ENCODE measurements at regions of chr1 and their contacts with region 1.

Region 1: DNA sequence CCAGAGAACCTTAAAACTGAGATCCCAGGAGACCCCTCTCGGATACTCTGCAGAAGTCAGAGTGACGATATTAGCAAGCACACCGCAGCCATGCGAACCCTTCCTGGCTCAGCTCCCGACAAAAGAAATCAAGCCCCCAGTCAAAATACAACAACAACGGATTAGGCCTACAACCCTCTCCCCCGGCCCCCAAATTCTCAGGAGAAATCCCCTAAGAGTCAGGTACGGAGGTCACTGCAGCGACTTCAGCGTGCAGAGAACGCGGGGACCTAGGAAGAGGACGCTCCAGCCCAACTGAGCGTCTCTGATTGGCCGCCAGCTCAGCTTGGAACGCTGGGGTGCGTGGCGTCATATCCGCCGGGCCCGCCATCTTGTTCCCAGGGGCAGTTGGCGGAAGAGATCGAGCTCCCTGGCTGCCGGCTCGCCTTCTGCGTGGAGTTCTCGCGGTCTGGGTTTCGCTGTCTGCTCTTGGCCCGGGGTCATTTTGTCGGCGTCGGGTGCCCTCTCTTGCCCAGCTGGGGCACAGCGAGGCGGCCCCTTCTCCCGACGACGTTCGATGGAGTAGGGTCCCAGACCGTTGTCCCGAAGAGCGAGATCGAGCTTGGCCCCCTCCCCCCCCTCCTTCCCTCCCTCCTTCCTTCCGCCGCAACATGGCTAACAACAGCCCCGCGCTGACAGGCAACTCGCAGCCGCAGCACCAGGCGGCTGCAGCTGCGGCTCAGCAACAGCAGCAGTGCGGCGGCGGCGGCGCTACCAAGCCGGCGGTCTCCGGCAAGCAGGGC is at the start of gene PRPF38B:
- DNase-seq: peak; percentile 72
- H3K4me3 ChIP-seq: peak within 1 kb of the TSS; percentile 89
- H3K27ac ChIP-seq: peak within 1 kb of the TSS; percentile 97
- H3K27me3 ChIP-seq: no peaks in the 10 kb centered on the region
- CTCF ChIP-seq: no peak
- polyA plus RNA-seq, gene PRPF38B: 23.4 and 35.6 TPM in 2 replicates

Region 2: GRCh38 chr1:108653431-108654105 is 38.6 kb before region 1 on chr1:
- CTCF ChIA-PET with region 1: no interaction called
- POLR2A ChIA-PET with region 1: no interaction called
- DNase-seq: no peak
- H3K4me3 ChIP-seq: no peak overlapping the region
- H3K27ac ChIP-seq: no peak overlapping the region
- H3K27me3 ChIP-seq: no peaks in the 10 kb centered on the region
- CTCF ChIP-seq: no peak

Region 3: DNA sequence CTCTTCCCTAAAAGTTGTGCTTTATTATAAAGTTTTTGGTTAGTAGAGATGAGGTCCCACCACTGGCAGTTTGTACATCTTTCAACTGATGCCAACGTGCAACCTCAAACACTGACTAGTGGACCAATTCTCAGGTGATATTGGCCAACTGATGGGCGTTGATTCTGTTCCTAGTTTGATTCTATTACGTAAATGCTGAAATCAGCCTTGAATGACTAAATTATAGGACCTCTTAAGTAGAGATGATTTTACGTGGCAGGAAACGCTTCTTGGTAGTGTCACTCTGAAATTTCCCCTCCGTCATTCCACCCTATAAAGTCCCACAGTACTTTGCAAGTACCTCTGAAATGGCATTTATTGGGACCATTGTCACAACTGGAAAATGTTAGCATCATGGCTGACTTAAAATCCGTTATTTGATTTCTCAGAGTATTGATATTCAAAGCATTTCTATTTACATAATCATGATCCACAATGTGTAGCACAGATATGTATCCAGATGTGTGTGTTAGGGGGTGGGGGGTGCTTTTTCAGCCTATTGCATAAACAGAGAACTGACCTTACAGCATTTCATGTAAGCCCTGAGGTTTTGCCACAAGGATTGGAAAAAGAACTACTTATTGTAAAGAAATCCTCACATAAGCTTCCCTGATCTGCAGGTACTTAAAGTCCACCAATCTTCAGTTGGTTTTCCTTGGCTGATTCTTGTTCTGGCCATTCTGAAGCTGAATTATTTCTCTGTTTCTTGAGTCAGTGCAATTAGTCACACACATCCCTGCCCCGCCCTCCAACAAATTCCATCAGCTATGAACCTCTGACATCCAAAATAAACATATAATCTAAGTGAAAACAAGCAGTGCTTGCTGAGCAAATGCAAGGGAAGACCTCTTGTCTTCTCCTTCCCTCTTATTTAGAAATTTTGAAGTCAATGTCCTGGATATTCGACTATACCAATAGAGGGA is 12.1 kb after region 1 on chr1:
- CTCF ChIA-PET with region 1: no interaction called
- POLR2A ChIA-PET with region 1: interaction called, 10 read pairs
- DNase-seq: peak; percentile 45
- H3K4me3 ChIP-seq: no peak overlapping the region
- H3K27ac ChIP-seq: peak overlapping the region; percentile 13
- H3K27me3 ChIP-seq: no peaks in the 10 kb centered on the region
- CTCF ChIP-seq: no peak

Region 4: DNA sequence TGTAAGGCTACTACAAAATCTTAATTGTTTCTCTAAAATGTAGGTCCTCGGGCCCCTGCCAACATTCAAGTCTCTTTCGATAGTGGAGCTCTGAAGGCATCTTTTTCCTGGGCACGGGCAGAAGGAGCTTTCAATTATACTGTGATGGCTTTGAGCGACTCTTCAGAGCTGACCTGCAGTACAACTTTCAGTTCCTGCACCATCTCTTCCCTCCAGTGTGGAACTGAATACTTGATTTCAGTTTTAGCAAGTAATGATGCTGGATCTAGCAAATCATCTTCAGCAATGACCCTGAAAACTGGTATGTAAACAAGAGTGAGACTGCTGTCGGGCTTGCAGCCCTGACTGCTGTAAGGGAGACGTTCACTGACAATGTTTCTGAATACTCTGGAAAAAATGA is 30.2 kb after region 1 on chr1:
- CTCF ChIA-PET with region 1: no interaction called
- POLR2A ChIA-PET with region 1: interaction called, 10 read pairs
- DNase-seq: no peak
- H3K4me3 ChIP-seq: peak overlapping the region; percentile 2; the same call in 1 of the 2 replicates
- H3K27ac ChIP-seq: no peak overlapping the region
- H3K27me3 ChIP-seq: no peaks in the 10 kb centered on the region
- CTCF ChIP-seq: no peak

Region 5: GRCh38 chr1:108746372-108747205 is 54.5 kb after region 1 on chr1 and contains the start of gene STXBP3:
- CTCF ChIA-PET with region 1: no interaction called
- POLR2A ChIA-PET with region 1: interaction called, 13 read pairs
- DNase-seq: peak; percentile 97
- H3K4me3 ChIP-seq: peak within 1 kb of the TSS; percentile 98
- H3K27ac ChIP-seq: peak within 1 kb of the TSS; percentile 97
- H3K27me3 ChIP-seq: no peaks in the 10 kb centered on the region
- CTCF ChIP-seq: peak; percentile 97
- polyA plus RNA-seq, gene STXBP3: 25.5 and 44.0 TPM in 2 replicates

Region 6: GRCh38 chr1:109027841-109028240 is 335.7 kb after region 1 on chr1:
- CTCF ChIA-PET with region 1: no interaction called
- POLR2A ChIA-PET with region 1: no interaction called
- DNase-seq: no peak
- H3K4me3 ChIP-seq: no peak overlapping the region
- H3K27ac ChIP-seq: no peak overlapping the region
- H3K27me3 ChIP-seq: no peaks in the 10 kb centered on the region
- CTCF ChIP-seq: no peak